ENCODE measurements at regions of chr14 and their contacts with region 1.

Region 1: DNA sequence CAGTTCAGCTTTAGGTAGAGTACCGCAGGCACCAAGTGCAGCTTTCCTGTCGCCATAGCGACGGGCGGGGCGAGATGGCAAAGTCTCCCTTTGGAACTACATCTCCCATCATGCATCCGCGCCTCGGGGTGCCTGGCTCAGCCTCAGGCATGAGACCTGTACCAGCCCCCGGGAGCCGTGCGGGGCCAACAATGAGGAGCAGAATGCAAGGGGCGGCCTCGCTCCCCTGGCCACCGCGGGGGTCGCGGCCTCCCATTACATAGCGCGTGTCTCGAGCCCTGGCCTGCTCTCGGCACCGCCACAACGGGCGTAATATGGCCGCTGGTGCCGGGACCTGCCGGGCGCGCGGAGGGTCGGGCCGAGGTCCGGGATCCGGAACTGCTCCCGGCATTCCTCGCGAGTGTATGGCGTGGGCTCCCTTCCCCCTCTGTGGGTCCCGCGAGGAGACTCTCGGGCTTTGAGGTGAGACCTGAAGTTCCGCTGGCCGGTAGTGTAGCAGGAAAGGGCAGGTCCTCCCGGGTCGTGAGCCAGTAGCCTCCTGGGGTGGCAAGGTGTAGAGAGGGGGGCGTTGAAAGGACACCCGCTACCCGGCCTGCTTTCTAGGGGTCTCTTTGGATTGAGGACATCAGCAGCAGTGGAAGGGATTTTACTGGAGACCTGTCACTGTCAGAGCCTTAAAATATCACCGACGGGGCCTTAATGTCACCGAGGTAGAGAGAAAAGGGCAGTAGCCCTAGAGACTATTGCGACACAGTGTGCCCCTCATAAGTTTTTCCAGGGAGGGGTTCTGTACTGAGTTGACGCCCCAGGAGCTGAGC is at the start of gene THTPA:
- DNase-seq: peak; percentile 95
- H3K4me3 ChIP-seq: peak within 1 kb of the TSS; percentile 88
- H3K27ac ChIP-seq: peak within 1 kb of the TSS; percentile 41
- H3K4me1 ChIP-seq: peaks cover 17% of the 10 kb centered on the region
- H3K27me3 ChIP-seq: no peaks in the 10 kb centered on the region
- total RNA-seq, gene THTPA: 21.0 and 33.8 TPM in 2 replicates

Region 2: GRCh38 chr14:23483236-23483854 is 72.7 kb before region 1 on chr14:
- in situ Hi-C with region 1: loop called (anchors 10 kb)
- DNase-seq: peak; percentile 43
- H3K4me3 ChIP-seq: no peak overlapping the region
- H3K27ac ChIP-seq: no peak overlapping the region
- H3K4me1 ChIP-seq: no peaks in the 10 kb centered on the region
- H3K27me3 ChIP-seq: no peaks in the 10 kb centered on the region

Measured in GM23248 (cell line).